CD4-positive, alpha-beta memory T cell (primary cell): ENCODE measurements at regions of chr20 and their contacts with region 1.

Region 1: GRCh38 chr20:31723319-31724078 is 831 bp upstream of the BCL2L1 start:
- DNase-seq: peak; percentile 97 to 100 (median 98)
- H3K4me3 ChIP-seq: peak overlapping the region; percentile 92 to 99
- H3K4me3 Mint-ChIP-seq: peak overlapping the region; percentile 89 to 97 (median 94)
- H3K27ac ChIP-seq: peak overlapping the region; percentile 96
- H3K27ac Mint-ChIP-seq: peak overlapping the region; percentile 91 to 98 (median 96)
- H3K4me1 ChIP-seq: peaks cover 31% of the 10 kb centered on the region
- H3K4me1 Mint-ChIP-seq: peaks cover 31 to 46% (median 38%) of the 10 kb centered on the region in 4 donors
- H3K27me3 ChIP-seq: no peaks in the 10 kb centered on the region
- H3K27me3 Mint-ChIP-seq: no peaks in the 10 kb centered on the region

Region 2: GRCh38 chr20:31572701-31573554 is 150.6 kb before region 1 on chr20:
- CTCF ChIA-PET with region 1: interaction called, 15 read pairs
- POLR2A ChIA-PET with region 1: interaction called, 19 read pairs
- intact Hi-C with region 1: loop called (anchors 1 kb)
- DNase-seq: peak; percentile 73 to 85 (median 79)
- H3K4me3 ChIP-seq: peak overlapping the region; percentile 61 to 71
- H3K4me3 Mint-ChIP-seq: peak overlapping the region; percentile 87 to 95 (median 88)
- H3K27ac ChIP-seq: peak overlapping the region; percentile 71
- H3K27ac Mint-ChIP-seq: peak overlapping the region; percentile 86 to 96 (median 90)
- H3K4me1 ChIP-seq: peaks cover 14% of the 10 kb centered on the region
- H3K4me1 Mint-ChIP-seq: peaks cover 14 to 29% (median 19%) of the 10 kb centered on the region in 4 donors
- H3K27me3 ChIP-seq: no peaks in the 10 kb centered on the region
- H3K27me3 Mint-ChIP-seq: no peaks in the 10 kb centered on the region

Region 3: DNA sequence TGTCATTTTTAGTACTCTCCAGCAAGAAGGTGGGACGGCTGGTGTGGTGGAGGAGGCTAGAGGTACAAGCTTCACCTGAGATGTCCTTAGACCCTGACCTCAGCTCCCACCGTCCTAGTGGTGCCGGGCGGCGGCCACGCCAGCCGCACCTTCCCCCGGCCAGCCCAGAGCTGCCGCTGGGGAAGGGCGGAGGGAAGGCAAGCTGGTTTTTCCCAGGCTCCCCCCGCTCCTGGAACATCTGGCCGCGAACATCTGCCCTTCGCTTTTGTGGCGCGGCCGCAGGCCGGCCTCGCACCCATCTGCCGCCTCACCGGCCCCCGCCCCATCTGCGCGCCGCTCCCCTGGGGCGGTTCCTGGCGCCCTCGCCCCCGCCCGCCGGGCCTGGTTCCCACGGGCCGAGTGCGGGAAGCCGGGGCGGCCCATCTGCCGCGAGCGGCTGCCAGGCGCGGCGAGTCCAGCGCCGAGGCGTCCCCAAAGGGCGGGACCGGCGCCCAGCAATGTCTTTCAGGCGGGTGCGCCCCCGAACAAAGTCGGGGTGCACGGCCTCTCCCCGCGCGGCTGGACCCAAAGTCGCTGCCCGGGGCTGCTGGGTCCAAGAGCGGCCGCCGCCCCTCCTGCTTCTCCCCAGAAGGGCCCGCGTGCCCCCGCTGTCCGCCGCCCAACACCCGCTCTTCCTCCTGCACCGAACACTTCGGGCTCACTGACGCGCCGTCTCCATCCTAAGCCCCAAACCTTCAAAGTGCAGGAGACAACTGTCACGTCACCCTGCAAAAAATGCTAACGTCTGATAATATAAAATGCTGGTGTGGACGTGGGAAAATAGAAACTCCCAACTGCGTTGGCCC is 135.7 kb before region 1 on chr20:
- CTCF ChIA-PET with region 1: no interaction called
- POLR2A ChIA-PET with region 1: no interaction called
- intact Hi-C with region 1: no loop called
- DNase-seq: no peak
- H3K4me3 ChIP-seq: no peak overlapping the region
- H3K4me3 Mint-ChIP-seq: peak overlapping the region; percentile 62 to 91 (median 84)
- H3K27ac ChIP-seq: no peak overlapping the region
- H3K27ac Mint-ChIP-seq: peak overlapping the region in 2 of 7 donors; percentile 0 to 3
- H3K4me1 ChIP-seq: peaks cover 9% of the 10 kb centered on the region
- H3K4me1 Mint-ChIP-seq: peaks cover 5 to 11% (median 7%) of the 10 kb centered on the region in 4 donors
- H3K27me3 ChIP-seq: peaks cover 9% of the 10 kb centered on the region
- H3K27me3 Mint-ChIP-seq: peaks cover 16 to 20% of the 10 kb centered on the region in 2 donors

Region 4: GRCh38 chr20:31661625-31662371 is 61.7 kb before region 1 on chr20:
- CTCF ChIA-PET with region 1: interaction called, 581 read pairs
- POLR2A ChIA-PET with region 1: interaction called, 166 read pairs
- intact Hi-C with region 1: loop called (anchors 1 kb)
- DNase-seq: peak; percentile 70 to 81 (median 73)
- H3K4me3 ChIP-seq: peak overlapping the region in 1 of 2 donors; percentile 70
- H3K4me3 Mint-ChIP-seq: peak overlapping the region; percentile 83 to 93 (median 84)
- H3K27ac ChIP-seq: peak overlapping the region; percentile 59
- H3K27ac Mint-ChIP-seq: peak overlapping the region; percentile 57 to 95 (median 89)
- H3K4me1 ChIP-seq: peaks cover 31% of the 10 kb centered on the region
- H3K4me1 Mint-ChIP-seq: peaks cover 21 to 43% (median 29%) of the 10 kb centered on the region in 4 donors
- H3K27me3 ChIP-seq: no peaks in the 10 kb centered on the region
- H3K27me3 Mint-ChIP-seq: no peaks in the 10 kb centered on the region

Region 5: DNA sequence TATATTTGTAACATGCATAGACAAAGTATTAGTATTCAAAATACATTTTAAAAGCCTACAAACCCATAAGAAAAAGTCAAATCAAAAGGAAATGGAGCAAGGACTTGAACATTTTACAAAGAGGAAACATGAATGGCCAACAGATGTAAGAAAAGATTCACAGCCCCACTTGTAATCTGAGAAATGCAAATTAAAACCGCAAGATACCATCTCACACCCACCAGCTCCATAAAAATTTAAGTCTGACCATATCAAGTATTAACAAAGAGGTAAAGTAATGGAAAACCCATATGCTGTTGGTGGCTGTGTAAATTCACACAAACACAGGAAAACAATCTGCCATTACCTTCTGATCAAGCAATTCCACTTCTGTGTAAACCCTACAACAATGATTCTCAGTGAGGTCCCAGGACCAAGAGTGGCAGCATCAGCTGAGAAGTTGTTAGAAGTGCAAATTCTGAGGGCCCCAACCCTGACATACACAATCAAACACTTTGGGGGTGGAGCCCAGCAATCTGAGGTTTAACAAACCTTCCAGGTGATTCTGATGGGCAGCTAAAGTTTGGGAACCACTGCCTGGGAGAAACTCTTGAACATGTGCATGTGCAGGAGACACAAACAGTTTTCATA is 31.7 kb before region 1 on chr20:
- CTCF ChIA-PET with region 1: interaction called, 25 read pairs
- POLR2A ChIA-PET with region 1: interaction called, 3 read pairs
- intact Hi-C with region 1: no loop called
- DNase-seq: no peak
- H3K4me3 ChIP-seq: no peak overlapping the region
- H3K4me3 Mint-ChIP-seq: peak overlapping the region in 3 of 8 donors; percentile 4 to 63 (median 14)
- H3K27ac ChIP-seq: no peak overlapping the region
- H3K27ac Mint-ChIP-seq: peak overlapping the region in 6 of 7 donors; percentile 54 to 84 (median 70)
- H3K4me1 ChIP-seq: peaks cover 75% of the 10 kb centered on the region
- H3K4me1 Mint-ChIP-seq: peaks cover 39 to 77% (median 55%) of the 10 kb centered on the region in 4 donors
- H3K27me3 ChIP-seq: no peaks in the 10 kb centered on the region
- H3K27me3 Mint-ChIP-seq: no peaks in the 10 kb centered on the region

Region 6: GRCh38 chr20:31738729-31739561 is 15.4 kb after region 1 on chr20 and contains the start of gene TPX2:
- CTCF ChIA-PET with region 1: interaction called, 29 read pairs
- POLR2A ChIA-PET with region 1: interaction called, 16 read pairs
- intact Hi-C with region 1: loop called (anchors 1 kb)
- DNase-seq: peak; percentile 72 to 75 (median 73)
- H3K4me3 ChIP-seq: peak within 1 kb of the TSS; percentile 38 to 72
- H3K4me3 Mint-ChIP-seq: no peak within 1 kb of the TSS
- H3K27ac ChIP-seq: peak within 1 kb of the TSS; percentile 38
- H3K27ac Mint-ChIP-seq: no peak within 1 kb of the TSS
- H3K4me1 ChIP-seq: peaks cover 19% of the 10 kb centered on the region
- H3K4me1 Mint-ChIP-seq: peaks cover 0 to 4% (median 0%) of the 10 kb centered on the region in 4 donors
- H3K27me3 ChIP-seq: no peaks in the 10 kb centered on the region
- H3K27me3 Mint-ChIP-seq: no peaks in the 10 kb centered on the region
- total RNA-seq, gene TPX2: 0.30 to 0.44 TPM